ENCODE measurements at regions of chr10 and their contacts with region 1.

Region 1: GRCh38 chr10:21926949-21927348 is 76.6 kb downstream of the DNAJC1 start:
- DNase-seq: peak; percentile 89
- H3K4me3 ChIP-seq: no peak overlapping the region; the same call in 1 of the 2 replicates
- CTCF ChIP-seq: no peak

Region 2: GRCh38 chr10:21912625-21913024 is 14.3 kb before region 1 on chr10:
- CTCF ChIA-PET with region 1: no interaction called
- POLR2A ChIA-PET with region 1: no interaction called
- DNase-seq: no peak
- H3K4me3 ChIP-seq: no peak overlapping the region
- CTCF ChIP-seq: no peak

Region 3: GRCh38 chr10:21953585-21954057 is 26.7 kb after region 1 on chr10:
- CTCF ChIA-PET with region 1: interaction called, 10 read pairs
- POLR2A ChIA-PET with region 1: no interaction called
- DNase-seq: peak; percentile 1
- H3K4me3 ChIP-seq: no peak overlapping the region
- CTCF ChIP-seq: peak; percentile 8

Measured in AG04449 (cell line).